GM12878 (cell line): ENCODE measurements at regions of chrX and their contacts with region 1.

Region 1: DNA sequence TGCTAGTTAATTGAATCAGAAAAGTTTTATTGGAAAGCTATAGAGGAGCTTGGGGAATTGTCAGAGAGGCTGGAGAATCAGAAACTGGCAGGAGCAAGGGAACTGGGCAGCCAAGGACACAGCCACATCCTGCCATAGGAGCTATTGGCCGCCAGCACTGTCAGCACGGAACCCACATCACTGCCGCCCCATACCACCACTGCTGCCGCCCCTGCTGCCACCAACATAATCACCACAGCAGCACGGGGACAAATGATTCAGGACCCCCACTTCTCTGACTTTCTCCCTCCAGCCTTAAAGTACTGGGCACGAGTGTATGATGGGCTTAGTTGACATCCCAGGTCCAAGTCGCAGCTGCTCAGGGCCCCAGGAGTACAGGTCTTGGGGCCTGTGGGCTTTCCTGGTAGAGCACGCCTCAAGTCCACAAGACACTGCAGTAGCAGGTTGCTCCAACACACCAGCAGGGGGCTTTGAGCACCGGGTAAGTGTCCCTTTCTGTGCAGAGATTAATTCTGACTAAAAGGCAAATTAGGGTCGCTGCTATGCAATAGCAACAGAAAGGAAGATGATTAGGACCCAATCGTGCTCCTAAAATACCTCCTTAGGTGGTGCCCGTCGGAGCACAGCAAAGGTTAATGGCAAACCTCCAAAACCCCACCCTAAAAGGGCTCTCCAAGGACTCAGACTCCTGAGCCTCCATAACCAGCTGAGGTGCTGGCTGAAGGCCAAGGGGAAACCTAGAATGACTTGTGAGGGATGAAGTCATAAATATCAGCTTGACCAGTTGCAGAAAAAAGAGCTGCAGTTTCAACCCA is 6.9 kb downstream of the PJA1 start:
- DNase-seq: no peak
- ATAC-seq: peak; percentile 98
- H3K4me3 ChIP-seq: no peak overlapping the region
- H3K27ac ChIP-seq: no peak overlapping the region
- H3K4me1 ChIP-seq: no peaks in the 10 kb centered on the region; the same call in 1 of the 2 replicates
- H3K27me3 ChIP-seq: no peaks in the 10 kb centered on the region
- CTCF ChIP-seq: peak; percentile 45 to 64 (median 54)
- EP300 ChIP-seq: no peak
- POLR2A ChIP-seq: no peak
- RAD21 ChIP-seq: peak; percentile 45

Region 2: GRCh38 chrX:69107231-69107739 is 51.1 kb before region 1 on chrX:
- CTCF ChIA-PET with region 1: no interaction called
- POLR2A ChIA-PET with region 1: no interaction called
- RAD21 ChIA-PET with region 1: no interaction called
- SMC1A ChIA-PET with region 1: no interaction called
- in situ Hi-C with region 1: no loop called
- intact Hi-C with region 1: no loop called
- DNase-seq: no peak
- ATAC-seq: no peak
- H3K4me3 ChIP-seq: no peak overlapping the region
- H3K27ac ChIP-seq: no peak overlapping the region
- H3K4me1 ChIP-seq: no peaks in the 10 kb centered on the region
- H3K27me3 ChIP-seq: no peaks in the 10 kb centered on the region; a peak in 1 of 4 replicates
- CTCF ChIP-seq: no peak
- EP300 ChIP-seq: no peak
- POLR2A ChIP-seq: no peak
- RAD21 ChIP-seq: no peak

Region 3: DNA sequence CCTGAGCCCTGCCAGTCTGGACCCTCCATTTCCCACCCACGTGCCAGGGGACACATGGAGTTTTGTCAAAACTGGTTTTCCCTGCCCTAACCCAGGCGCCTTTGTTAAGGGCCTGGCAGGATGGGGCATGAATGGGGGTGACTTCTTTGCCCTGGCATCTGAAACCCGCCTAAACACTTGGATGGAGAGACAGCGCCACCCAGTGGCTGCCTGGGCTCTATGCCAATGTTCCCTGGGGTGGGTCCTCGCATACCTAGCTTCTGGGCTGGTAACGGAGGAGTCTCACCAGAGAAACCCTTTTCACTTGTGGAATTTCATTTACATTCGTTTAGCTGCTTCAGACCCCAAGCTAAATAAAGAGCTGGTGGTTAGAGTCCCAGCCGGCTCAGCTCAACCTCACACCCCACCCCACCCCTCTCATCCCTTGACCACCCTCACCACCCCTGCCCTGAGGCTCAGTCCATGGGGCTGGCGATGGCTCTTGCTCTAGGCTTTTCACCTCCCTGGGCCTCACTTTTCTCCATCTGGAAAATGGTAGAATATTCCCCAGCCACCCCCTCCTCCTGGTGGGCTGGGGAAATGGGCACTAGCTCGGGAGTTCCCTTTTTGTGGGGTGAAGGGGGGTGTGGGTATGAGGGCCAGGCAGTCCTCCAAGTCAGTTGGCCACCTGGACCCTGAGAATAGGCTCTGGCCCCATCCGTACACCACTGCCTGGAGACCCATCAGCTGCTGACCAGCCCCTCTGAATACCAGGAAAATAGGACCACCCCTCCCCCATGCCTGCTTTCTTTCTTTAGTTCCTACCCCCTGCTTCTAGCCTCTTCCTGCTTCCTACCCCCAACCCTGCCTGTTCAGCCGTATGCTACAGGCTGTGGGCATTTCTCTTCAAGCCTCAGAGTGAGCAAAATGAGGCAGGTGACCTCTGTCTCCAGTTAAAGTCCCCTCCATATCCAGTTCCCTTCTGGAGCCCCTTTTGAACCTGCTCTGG is 64.0 kb after region 1 on chrX:
- CTCF ChIA-PET with region 1: interaction called, 14 read pairs
- POLR2A ChIA-PET with region 1: interaction called, 3 read pairs
- RAD21 ChIA-PET with region 1: no interaction called
- SMC1A ChIA-PET with region 1: no interaction called
- in situ Hi-C with region 1: no loop called
- intact Hi-C with region 1: no loop called
- DNase-seq: no peak
- ATAC-seq: peak; percentile 95
- H3K4me3 ChIP-seq: no peak overlapping the region
- H3K27ac ChIP-seq: no peak overlapping the region
- H3K4me1 ChIP-seq: no peaks in the 10 kb centered on the region
- H3K27me3 ChIP-seq: no peaks in the 10 kb centered on the region; a peak in 2 of 4 replicates
- CTCF ChIP-seq: peak; percentile 64 to 73 (median 71)
- EP300 ChIP-seq: no peak
- POLR2A ChIP-seq: no peak
- RAD21 ChIP-seq: peak; percentile 83

Region 4: DNA sequence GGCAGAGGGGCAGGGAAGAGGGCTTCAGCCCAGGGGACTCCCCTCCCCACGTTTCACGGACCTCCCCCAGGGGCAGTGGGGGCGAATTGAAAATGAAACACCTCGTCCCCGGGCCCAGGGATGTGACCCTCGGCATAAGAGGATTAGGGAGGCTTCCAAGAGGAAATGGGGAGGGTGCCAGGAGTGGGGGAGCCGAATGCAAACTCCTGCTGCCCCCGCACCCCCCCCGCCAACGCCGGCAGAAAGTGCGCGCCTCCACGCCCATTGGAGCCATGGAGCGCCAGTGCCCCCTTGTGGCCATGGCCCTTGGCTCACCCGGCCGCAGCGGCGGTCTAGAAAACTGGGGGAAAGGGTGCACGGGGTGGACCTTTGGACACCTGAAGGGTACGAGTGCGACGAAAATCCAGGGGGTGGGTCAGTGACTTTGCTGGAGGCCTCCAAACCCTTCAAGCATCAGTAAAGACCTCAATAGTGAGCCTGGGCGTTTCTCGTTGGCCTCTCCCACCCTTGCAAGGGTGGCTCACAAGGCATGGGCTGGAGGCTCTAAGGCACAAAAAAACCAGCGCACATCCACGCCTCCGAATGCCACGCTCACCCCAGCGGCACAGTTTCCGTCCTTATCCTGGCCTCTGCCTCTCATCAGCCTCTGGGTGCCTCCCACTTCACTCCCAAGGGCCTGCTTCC is 127.7 kb after region 1 on chrX:
- CTCF ChIA-PET with region 1: interaction called, 3 read pairs
- POLR2A ChIA-PET with region 1: no interaction called
- RAD21 ChIA-PET with region 1: no interaction called
- SMC1A ChIA-PET with region 1: no interaction called
- in situ Hi-C with region 1: no loop called
- intact Hi-C with region 1: loop called (anchors 10 kb)
- DNase-seq: no peak
- ATAC-seq: peak; percentile 95
- H3K4me3 ChIP-seq: no peak overlapping the region
- H3K27ac ChIP-seq: no peak overlapping the region
- H3K4me1 ChIP-seq: no peaks in the 10 kb centered on the region
- H3K27me3 ChIP-seq: no peaks in the 10 kb centered on the region
- CTCF ChIP-seq: peak; percentile 82 to 98 (median 84)
- EP300 ChIP-seq: no peak
- POLR2A ChIP-seq: no peak
- RAD21 ChIP-seq: peak; percentile 84